ENCODE measurements at regions of chr15 and their contacts with region 1.

Region 1: GRCh38 chr15:73908030-73908821 is 18.0 kb upstream of the LOXL1 start:
- DNase-seq: peak; percentile 89
- H3K4me3 Mint-ChIP-seq: no peak overlapping the region
- H3K27ac Mint-ChIP-seq: no peak overlapping the region
- H3K4me1 Mint-ChIP-seq: no peaks in the 10 kb centered on the region
- H3K27me3 Mint-ChIP-seq: no peaks in the 10 kb centered on the region

Region 2: DNA sequence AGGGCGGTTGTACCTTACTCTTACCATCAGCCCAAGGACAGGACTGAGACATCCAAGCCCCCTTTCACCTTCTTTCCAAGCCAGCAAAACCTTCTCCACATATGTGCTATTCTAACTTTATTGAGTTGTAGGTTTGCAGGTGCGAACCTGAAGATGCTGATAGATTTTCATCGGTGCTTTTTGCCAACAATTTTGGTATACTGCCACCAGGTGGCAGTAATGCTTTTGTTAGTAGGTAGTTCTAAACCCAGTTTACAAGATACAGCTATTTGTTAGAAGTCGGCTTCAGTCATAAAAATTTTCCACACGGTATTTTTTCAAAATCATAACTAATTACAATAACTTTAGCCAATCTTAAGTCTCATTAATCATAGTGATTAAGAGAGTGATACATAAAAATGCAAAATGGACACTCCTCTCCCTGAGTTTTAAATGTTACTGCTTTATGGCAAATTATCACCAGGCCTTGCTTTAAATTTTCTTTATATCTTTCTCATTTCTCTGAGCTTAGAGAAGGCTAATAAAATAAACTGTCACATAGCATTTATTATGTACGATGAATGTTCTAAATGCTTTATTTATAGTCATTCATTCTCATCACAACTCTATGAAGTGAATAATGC is 34.2 kb before region 1 on chr15:
- CTCF ChIA-PET with region 1: interaction called, 82 read pairs
- intact Hi-C with region 1: loop called (anchors 1 kb)
- DNase-seq: peak; percentile 51
- H3K4me3 Mint-ChIP-seq: no peak overlapping the region
- H3K27ac Mint-ChIP-seq: no peak overlapping the region
- H3K4me1 Mint-ChIP-seq: no peaks in the 10 kb centered on the region
- H3K27me3 Mint-ChIP-seq: peaks cover 26% of the 10 kb centered on the region

Region 3: GRCh38 chr15:73927476-73928240 is 19.4 kb after region 1 on chr15:
- CTCF ChIA-PET with region 1: interaction called, 44 read pairs
- intact Hi-C with region 1: no loop called
- DNase-seq: peak; percentile 84
- H3K4me3 Mint-ChIP-seq: peak overlapping the region; percentile 72
- H3K27ac Mint-ChIP-seq: no peak overlapping the region
- H3K4me1 Mint-ChIP-seq: peaks cover 33% of the 10 kb centered on the region
- H3K27me3 Mint-ChIP-seq: no peaks in the 10 kb centered on the region

Region 4: GRCh38 chr15:74340139-74340538 is 431.9 kb after region 1 on chr15:
- CTCF ChIA-PET with region 1: no interaction called
- intact Hi-C with region 1: no loop called
- DNase-seq: no peak
- H3K4me3 Mint-ChIP-seq: no peak overlapping the region
- H3K27ac Mint-ChIP-seq: no peak overlapping the region
- H3K4me1 Mint-ChIP-seq: no peaks in the 10 kb centered on the region
- H3K27me3 Mint-ChIP-seq: no peaks in the 10 kb centered on the region

Region 5: GRCh38 chr15:74396445-74397238 is 488.4 kb after region 1 on chr15:
- CTCF ChIA-PET with region 1: no interaction called
- intact Hi-C with region 1: no loop called
- DNase-seq: peak; percentile 83
- H3K4me3 Mint-ChIP-seq: peak overlapping the region; percentile 41
- H3K27ac Mint-ChIP-seq: peak overlapping the region; percentile 87
- H3K4me1 Mint-ChIP-seq: peaks cover 89% of the 10 kb centered on the region
- H3K27me3 Mint-ChIP-seq: no peaks in the 10 kb centered on the region